ENCODE measurements at regions of chr20 and their contacts with region 1.

Region 1: DNA sequence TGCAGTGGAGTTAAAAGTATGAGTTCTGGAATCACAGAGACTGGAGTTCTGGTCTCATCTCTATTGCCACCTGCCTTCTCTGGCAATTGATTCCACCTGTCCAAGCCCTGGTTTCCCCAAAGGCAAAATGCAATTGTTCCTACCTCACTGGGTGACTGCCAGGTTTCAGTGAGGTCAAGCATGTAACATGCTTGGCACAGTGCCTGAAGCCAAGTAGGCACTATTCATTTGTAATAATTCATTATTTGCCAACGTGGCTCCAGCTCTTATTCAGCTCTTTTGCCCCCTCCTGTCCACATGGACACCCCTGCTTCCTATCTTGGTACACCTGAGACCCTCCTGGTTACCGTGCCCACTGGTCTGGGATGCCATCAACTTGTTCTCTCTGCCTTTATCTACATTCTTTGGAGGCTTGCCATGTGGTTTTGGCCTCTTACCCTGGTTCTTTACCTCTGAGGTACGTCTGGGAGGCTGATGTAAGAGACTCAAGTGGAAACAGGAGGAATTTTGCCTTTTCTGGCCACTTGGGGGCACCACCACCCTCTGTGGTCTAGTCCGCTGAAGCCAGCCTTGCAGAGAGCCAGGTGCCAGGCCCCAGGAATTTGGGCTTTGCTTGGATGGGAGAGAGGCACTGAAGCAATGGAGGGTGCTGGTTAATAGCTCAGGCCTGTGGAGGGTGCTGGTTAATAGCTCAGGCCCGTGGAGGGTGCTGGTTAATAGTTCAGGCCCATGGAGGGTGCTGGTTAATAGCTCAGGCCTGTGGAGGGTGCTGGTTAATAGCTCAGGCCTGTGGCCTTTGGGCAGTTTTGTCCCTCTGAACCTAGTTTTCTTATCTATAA is 1.7 kb downstream of the KCNK15 start:
- DNase-seq: peak; percentile 62
- H3K4me3 Mint-ChIP-seq: no peak overlapping the region
- H3K27ac Mint-ChIP-seq: no peak overlapping the region
- H3K4me1 Mint-ChIP-seq: peaks cover 10% of the 10 kb centered on the region
- H3K27me3 Mint-ChIP-seq: peaks cover 28% of the 10 kb centered on the region

Region 2: GRCh38 chr20:44866703-44867335 is 119.4 kb after region 1 on chr20:
- CTCF ChIA-PET with region 1: interaction called, 28 read pairs
- POLR2A ChIA-PET with region 1: no interaction called
- DNase-seq: no peak
- H3K4me3 Mint-ChIP-seq: peak overlapping the region; percentile 40
- H3K27ac Mint-ChIP-seq: no peak overlapping the region
- H3K4me1 Mint-ChIP-seq: peaks cover 12% of the 10 kb centered on the region
- H3K27me3 Mint-ChIP-seq: peaks cover 9% of the 10 kb centered on the region

Measured in activated CD4-positive, alpha-beta memory T cell treated with anti-CD3 and anti-CD28 coated beads, Interleukin-2, amount 10 ng/mL, durations not matched to agents 7 days and 5 days (primary cell).